ENCODE measurements at regions of chr13 and their contacts with region 1.

Region 1: GRCh38 chr13:45340926-45341750 is at the start of gene TPT1:
- DNase-seq: peak; percentile 99 to 100 (median 100)
- ATAC-seq: peak; percentile 84
- H3K4me3 ChIP-seq: peak within 1 kb of the TSS; percentile 98
- H3K4me3 Mint-ChIP-seq: peak within 1 kb of the TSS; percentile 99
- H3K27ac ChIP-seq: peak within 1 kb of the TSS; percentile 98 to 100
- H3K27ac Mint-ChIP-seq: peak within 1 kb of the TSS; percentile 84
- H3K4me1 ChIP-seq: peaks cover 40% of the 10 kb centered on the region
- H3K4me1 Mint-ChIP-seq: peaks cover 66% of the 10 kb centered on the region
- H3K27me3 ChIP-seq: no peaks in the 10 kb centered on the region
- H3K27me3 Mint-ChIP-seq: no peaks in the 10 kb centered on the region
- CTCF ChIP-seq: no peak
- total RNA-seq, gene TPT1: 8,742 to 8,834 TPM

Region 2: GRCh38 chr13:45162821-45163220 is 178.3 kb before region 1 on chr13:
- CTCF ChIA-PET with region 1: no interaction called
- POLR2A ChIA-PET with region 1: no interaction called
- intact Hi-C with region 1: no loop called
- DNase-seq: no peak
- ATAC-seq: no peak
- H3K4me3 ChIP-seq: no peak overlapping the region
- H3K4me3 Mint-ChIP-seq: no peak overlapping the region
- H3K27ac ChIP-seq: no peak overlapping the region
- H3K27ac Mint-ChIP-seq: no peak overlapping the region
- H3K4me1 ChIP-seq: no peaks in the 10 kb centered on the region
- H3K4me1 Mint-ChIP-seq: no peaks in the 10 kb centered on the region
- H3K27me3 ChIP-seq: no peaks in the 10 kb centered on the region
- H3K27me3 Mint-ChIP-seq: no peaks in the 10 kb centered on the region
- CTCF ChIP-seq: no peak

Region 3: GRCh38 chr13:45310341-45311125 is 30.6 kb before region 1 on chr13:
- CTCF ChIA-PET with region 1: interaction called, 6 read pairs
- POLR2A ChIA-PET with region 1: interaction called, 5 read pairs
- intact Hi-C with region 1: loop called (anchors 1 to 2 kb)
- DNase-seq: no peak
- ATAC-seq: no peak
- H3K4me3 ChIP-seq: peak overlapping the region; percentile 63
- H3K4me3 Mint-ChIP-seq: peak overlapping the region; percentile 85
- H3K27ac ChIP-seq: no peak overlapping the region
- H3K27ac Mint-ChIP-seq: no peak overlapping the region
- H3K4me1 ChIP-seq: peaks cover 24% of the 10 kb centered on the region
- H3K4me1 Mint-ChIP-seq: peaks cover 20% of the 10 kb centered on the region
- H3K27me3 ChIP-seq: no peaks in the 10 kb centered on the region
- H3K27me3 Mint-ChIP-seq: peaks cover 8% of the 10 kb centered on the region
- CTCF ChIP-seq: no peak

Region 4: GRCh38 chr13:45367358-45367757 is 26.2 kb after region 1 on chr13:
- CTCF ChIA-PET with region 1: interaction called, 18 read pairs
- POLR2A ChIA-PET with region 1: interaction called, 81 read pairs
- intact Hi-C with region 1: loop called (anchors 1 kb)
- DNase-seq: peak; percentile 69 to 96 (median 88)
- ATAC-seq: peak; percentile 99
- H3K4me3 ChIP-seq: no peak overlapping the region
- H3K4me3 Mint-ChIP-seq: peak overlapping the region; percentile 30
- H3K27ac ChIP-seq: peak overlapping the region; percentile 21 to 72
- H3K27ac Mint-ChIP-seq: peak overlapping the region; percentile 79
- H3K4me1 ChIP-seq: peaks cover 38% of the 10 kb centered on the region
- H3K4me1 Mint-ChIP-seq: peaks cover 53% of the 10 kb centered on the region
- H3K27me3 ChIP-seq: no peaks in the 10 kb centered on the region
- H3K27me3 Mint-ChIP-seq: no peaks in the 10 kb centered on the region
- CTCF ChIP-seq: no peak

Region 5: GRCh38 chr13:45417790-45418534 is 76.8 kb after region 1 on chr13 and contains the start of gene SLC25A30:
- CTCF ChIA-PET with region 1: interaction called, 3 read pairs
- POLR2A ChIA-PET with region 1: interaction called, 43 read pairs
- intact Hi-C with region 1: loop called (anchors 2 kb)
- DNase-seq: peak; percentile 80 to 96 (median 90)
- ATAC-seq: peak; percentile 89
- H3K4me3 ChIP-seq: peak within 1 kb of the TSS; percentile 90
- H3K4me3 Mint-ChIP-seq: peak within 1 kb of the TSS; percentile 97
- H3K27ac ChIP-seq: peak within 1 kb of the TSS; percentile 68 to 82
- H3K27ac Mint-ChIP-seq: peak within 1 kb of the TSS; percentile 94
- H3K4me1 ChIP-seq: peaks cover 34% of the 10 kb centered on the region
- H3K4me1 Mint-ChIP-seq: peaks cover 30% of the 10 kb centered on the region
- H3K27me3 ChIP-seq: no peaks in the 10 kb centered on the region
- H3K27me3 Mint-ChIP-seq: no peaks in the 10 kb centered on the region
- CTCF ChIP-seq: no peak
- total RNA-seq, gene SLC25A30: 23.2 to 28.6 TPM

Region 6: GRCh38 chr13:45554604-45555109 is 213.5 kb after region 1 on chr13:
- CTCF ChIA-PET with region 1: no interaction called
- POLR2A ChIA-PET with region 1: no interaction called
- intact Hi-C with region 1: no loop called
- DNase-seq: no peak
- ATAC-seq: no peak
- H3K4me3 ChIP-seq: no peak overlapping the region
- H3K4me3 Mint-ChIP-seq: no peak overlapping the region
- H3K27ac ChIP-seq: no peak overlapping the region
- H3K27ac Mint-ChIP-seq: no peak overlapping the region
- H3K4me1 ChIP-seq: no peaks in the 10 kb centered on the region
- H3K4me1 Mint-ChIP-seq: no peaks in the 10 kb centered on the region
- H3K27me3 ChIP-seq: no peaks in the 10 kb centered on the region
- H3K27me3 Mint-ChIP-seq: peaks cover 7% of the 10 kb centered on the region
- CTCF ChIP-seq: no peak

Region 7: DNA sequence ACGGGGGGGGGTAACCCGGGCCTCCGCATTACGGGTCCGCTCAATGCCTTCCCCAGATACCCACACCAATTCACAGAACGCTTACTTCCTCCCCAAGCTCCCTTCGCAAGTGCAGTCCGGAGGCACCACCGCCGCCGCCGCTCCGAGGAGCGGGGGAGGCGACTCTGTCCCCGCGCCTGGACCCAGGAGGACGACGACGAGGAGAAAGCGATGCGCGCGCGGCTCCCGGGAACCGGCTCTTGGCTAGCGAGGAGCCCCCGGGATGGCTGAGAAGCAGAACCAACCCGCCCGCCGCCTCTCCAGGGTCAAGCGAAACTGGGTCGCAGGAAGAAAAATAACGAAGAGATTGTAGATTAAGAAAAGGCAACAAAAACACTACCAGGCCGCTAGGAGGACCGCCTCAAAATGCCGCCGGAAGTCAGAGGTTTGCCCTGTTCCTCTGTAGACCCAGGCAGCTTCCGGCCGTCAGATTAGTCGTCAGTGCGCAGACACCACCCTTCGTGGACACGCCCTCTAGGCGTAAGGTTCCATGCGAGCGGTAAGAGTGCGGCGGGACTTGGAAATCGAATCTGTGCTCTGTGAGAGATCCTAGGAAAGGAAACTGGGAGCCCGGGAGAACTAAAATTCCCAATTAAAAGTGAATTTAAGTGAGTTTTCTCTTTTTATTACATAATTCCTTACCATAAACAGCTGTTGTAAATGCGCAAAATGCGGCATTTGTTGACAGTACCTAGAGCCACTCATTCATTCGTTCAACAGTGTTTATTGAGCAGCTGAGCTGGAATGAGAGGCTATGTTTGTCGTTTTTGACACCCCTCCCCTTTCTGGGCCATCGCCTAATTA is 711.4 kb after region 1 on chr13 and contains the start of gene ZC3H13:
- CTCF ChIA-PET with region 1: no interaction called
- POLR2A ChIA-PET with region 1: no interaction called
- intact Hi-C with region 1: loop called in 1 of 2 experiments (anchors 10 kb)
- DNase-seq: peak; percentile 87 to 98 (median 89)
- ATAC-seq: peak; percentile 96
- H3K4me3 ChIP-seq: peak within 1 kb of the TSS; percentile 84
- H3K4me3 Mint-ChIP-seq: peak within 1 kb of the TSS; percentile 91
- H3K27ac ChIP-seq: peak within 1 kb of the TSS; percentile 97
- H3K27ac Mint-ChIP-seq: peak within 1 kb of the TSS; percentile 86
- H3K4me1 ChIP-seq: peaks cover 2% of the 10 kb centered on the region
- H3K4me1 Mint-ChIP-seq: peaks cover 53% of the 10 kb centered on the region
- H3K27me3 ChIP-seq: peaks cover 0 to 10% of the 10 kb centered on the region in 2 experiments
- H3K27me3 Mint-ChIP-seq: peaks cover 22% of the 10 kb centered on the region
- CTCF ChIP-seq: peak; percentile 48
- total RNA-seq, gene ZC3H13: 36.5 to 43.8 TPM